ENCODE measurements at regions of chr12 and their contacts with region 1.

Region 1: GRCh38 chr12:104763168-104763805 is 194.8 kb downstream of the SLC41A2 start:
- DNase-seq: peak; percentile 49
- H3K4me3 Mint-ChIP-seq: no peak overlapping the region
- H3K27ac Mint-ChIP-seq: peak overlapping the region; percentile 44
- H3K4me1 Mint-ChIP-seq: peaks cover 23% of the 10 kb centered on the region
- H3K27me3 Mint-ChIP-seq: no peaks in the 10 kb centered on the region

Region 2: DNA sequence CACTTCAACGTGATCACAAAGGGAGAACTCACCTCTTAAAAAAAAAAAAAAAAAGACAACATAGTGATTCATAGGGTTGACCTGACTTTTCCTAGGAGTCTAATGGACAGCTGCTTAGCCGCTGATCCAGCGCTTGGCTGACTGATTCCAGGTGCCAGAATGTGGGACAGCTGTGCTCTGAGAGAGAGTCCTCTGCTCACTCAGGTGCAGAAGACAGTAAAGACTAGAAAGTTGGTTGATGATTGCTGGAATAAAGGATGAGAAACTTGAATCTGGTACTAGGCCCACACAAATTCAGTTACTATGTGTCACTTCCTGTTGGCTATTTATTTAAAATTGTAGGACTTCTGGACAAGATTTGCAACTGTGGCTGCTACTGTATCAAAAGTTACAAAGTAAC is 77.1 kb before region 1 on chr12:
- CTCF ChIA-PET with region 1: no interaction called
- POLR2A ChIA-PET with region 1: no interaction called
- intact Hi-C with region 1: loop called (anchors 2 kb)
- DNase-seq: peak; percentile 62
- H3K4me3 Mint-ChIP-seq: no peak overlapping the region
- H3K27ac Mint-ChIP-seq: peak overlapping the region; percentile 92
- H3K4me1 Mint-ChIP-seq: peaks cover 85% of the 10 kb centered on the region
- H3K27me3 Mint-ChIP-seq: no peaks in the 10 kb centered on the region

Region 3: GRCh38 chr12:104740668-104741067 is 22.6 kb before region 1 on chr12:
- CTCF ChIA-PET with region 1: no interaction called
- POLR2A ChIA-PET with region 1: interaction called, 3 read pairs
- intact Hi-C with region 1: loop called (anchors 2 kb)
- DNase-seq: peak; percentile 37
- H3K4me3 Mint-ChIP-seq: peak overlapping the region; percentile 50
- H3K27ac Mint-ChIP-seq: peak overlapping the region; percentile 70
- H3K4me1 Mint-ChIP-seq: peaks cover 70% of the 10 kb centered on the region
- H3K27me3 Mint-ChIP-seq: no peaks in the 10 kb centered on the region

Region 4: GRCh38 chr12:104748356-104749128 is 14.7 kb before region 1 on chr12:
- CTCF ChIA-PET with region 1: interaction called, 3 read pairs
- POLR2A ChIA-PET with region 1: no interaction called
- intact Hi-C with region 1: loop called (anchors 2 kb)
- DNase-seq: no peak
- H3K4me3 Mint-ChIP-seq: no peak overlapping the region
- H3K27ac Mint-ChIP-seq: no peak overlapping the region
- H3K4me1 Mint-ChIP-seq: peaks cover 57% of the 10 kb centered on the region
- H3K27me3 Mint-ChIP-seq: no peaks in the 10 kb centered on the region